ENCODE measurements at regions of chr3 and their contacts with region 1.

Region 1: GRCh38 chr3:16600780-16601539 is 4.3 kb downstream of the DAZL start:
- DNase-seq: peak; percentile 79
- H3K4me3 ChIP-seq: no peak overlapping the region
- H3K27ac ChIP-seq: no peak overlapping the region
- H3K4me1 ChIP-seq: no peaks in the 10 kb centered on the region
- H3K27me3 ChIP-seq: no peaks in the 10 kb centered on the region
- CTCF ChIP-seq: peak; percentile 72 to 90 (median 82)
- POLR2A ChIP-seq: no peak

Region 2: GRCh38 chr3:16290007-16290826 is 310.7 kb before region 1 on chr3:
- intact Hi-C with region 1: no loop called
- DNase-seq: no peak
- H3K4me3 ChIP-seq: no peak overlapping the region
- H3K27ac ChIP-seq: no peak overlapping the region
- H3K4me1 ChIP-seq: no peaks in the 10 kb centered on the region
- H3K27me3 ChIP-seq: no peaks in the 10 kb centered on the region
- CTCF ChIP-seq: peak; percentile 13 to 80 (median 65)
- POLR2A ChIP-seq: no peak

Region 3: GRCh38 chr3:16658004-16658920 is 57.3 kb after region 1 on chr3:
- intact Hi-C with region 1: no loop called
- DNase-seq: no peak
- H3K4me3 ChIP-seq: no peak overlapping the region
- H3K27ac ChIP-seq: no peak overlapping the region
- H3K4me1 ChIP-seq: no peaks in the 10 kb centered on the region
- H3K27me3 ChIP-seq: peaks cover 2% of the 10 kb centered on the region
- CTCF ChIP-seq: no peak
- POLR2A ChIP-seq: no peak

Region 4: DNA sequence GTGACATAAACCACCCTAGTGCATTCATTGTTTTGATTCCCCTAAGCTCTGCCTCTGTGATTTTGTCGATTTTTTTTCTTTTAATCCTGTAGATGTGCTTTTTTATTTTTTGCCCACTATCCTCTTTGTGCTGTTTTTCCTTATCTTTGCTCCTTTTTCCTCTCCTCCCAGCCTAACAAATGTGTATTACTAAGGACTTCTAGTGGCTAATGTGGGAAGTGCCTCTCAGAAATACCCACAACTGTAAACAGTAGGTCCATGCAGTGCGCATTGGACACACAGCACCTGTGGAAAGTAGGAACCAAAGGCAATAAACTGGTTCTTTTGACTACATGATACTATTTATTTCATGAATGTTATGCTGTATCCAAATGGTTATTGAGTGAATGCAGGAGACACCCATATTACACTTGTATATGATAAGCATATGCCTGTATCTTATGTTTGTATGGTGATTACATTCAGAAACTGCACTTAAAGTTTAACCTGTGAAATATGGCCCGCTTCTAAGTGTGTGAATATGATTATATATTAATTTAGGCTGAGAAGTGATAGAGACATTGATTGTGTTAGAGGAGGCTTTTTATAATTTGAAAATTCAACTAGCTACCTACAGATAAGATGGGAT is 431.6 kb after region 1 on chr3:
- intact Hi-C with region 1: loop called (anchors 5 kb)
- DNase-seq: no peak
- H3K4me3 ChIP-seq: no peak overlapping the region
- H3K27ac ChIP-seq: no peak overlapping the region
- H3K4me1 ChIP-seq: no peaks in the 10 kb centered on the region
- H3K27me3 ChIP-seq: no peaks in the 10 kb centered on the region
- CTCF ChIP-seq: peak in 3 of 4 experiments; percentile 31 to 61 (median 54)
- POLR2A ChIP-seq: no peak

Region 5: GRCh38 chr3:17412950-17413530 is 812.1 kb after region 1 on chr3:
- intact Hi-C with region 1: loop called (anchors 10 kb)
- DNase-seq: peak; percentile 33
- H3K4me3 ChIP-seq: no peak overlapping the region
- H3K27ac ChIP-seq: no peak overlapping the region
- H3K4me1 ChIP-seq: no peaks in the 10 kb centered on the region
- H3K27me3 ChIP-seq: no peaks in the 10 kb centered on the region
- CTCF ChIP-seq: peak in 3 of 4 experiments; percentile 64 to 78 (median 68)
- POLR2A ChIP-seq: no peak

Measured in prostate gland (tissue), 2 donors.